ENCODE measurements at regions of chr4 and their contacts with region 1.

Region 1: DNA sequence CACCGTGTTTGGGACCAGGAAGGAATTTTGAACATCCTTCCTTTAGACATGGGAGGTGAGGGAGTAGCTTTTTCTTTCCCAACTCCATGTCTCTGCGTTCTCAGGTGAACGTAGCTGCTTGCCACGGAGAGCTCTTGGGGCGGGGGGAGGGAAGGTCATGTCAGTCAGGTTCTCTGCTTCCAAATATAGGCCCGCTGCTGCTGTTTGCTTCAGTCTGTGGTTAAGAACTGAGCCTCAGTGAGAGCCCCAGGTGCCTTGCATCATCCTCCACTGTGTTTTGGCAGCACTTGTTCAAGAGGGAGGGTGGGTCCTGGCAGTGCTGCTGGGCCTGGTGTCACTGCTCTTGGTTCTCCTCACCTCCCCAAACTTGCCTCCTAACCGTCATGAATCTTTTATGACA is 46.5 kb downstream of the HADH start:
- DNase-seq: peak; percentile 87
- H3K4me3 Mint-ChIP-seq: peak overlapping the region; percentile 42
- H3K27ac Mint-ChIP-seq: peak overlapping the region; percentile 93
- H3K4me1 Mint-ChIP-seq: peaks cover 66% of the 10 kb centered on the region
- H3K27me3 Mint-ChIP-seq: no peaks in the 10 kb centered on the region

Region 2: GRCh38 chr4:107951551-107951950 is 84.7 kb before region 1 on chr4:
- CTCF ChIA-PET with region 1: no interaction called
- POLR2A ChIA-PET with region 1: no interaction called
- DNase-seq: no peak
- H3K4me3 Mint-ChIP-seq: no peak overlapping the region
- H3K27ac Mint-ChIP-seq: no peak overlapping the region
- H3K4me1 Mint-ChIP-seq: no peaks in the 10 kb centered on the region
- H3K27me3 Mint-ChIP-seq: no peaks in the 10 kb centered on the region

Region 3: DNA sequence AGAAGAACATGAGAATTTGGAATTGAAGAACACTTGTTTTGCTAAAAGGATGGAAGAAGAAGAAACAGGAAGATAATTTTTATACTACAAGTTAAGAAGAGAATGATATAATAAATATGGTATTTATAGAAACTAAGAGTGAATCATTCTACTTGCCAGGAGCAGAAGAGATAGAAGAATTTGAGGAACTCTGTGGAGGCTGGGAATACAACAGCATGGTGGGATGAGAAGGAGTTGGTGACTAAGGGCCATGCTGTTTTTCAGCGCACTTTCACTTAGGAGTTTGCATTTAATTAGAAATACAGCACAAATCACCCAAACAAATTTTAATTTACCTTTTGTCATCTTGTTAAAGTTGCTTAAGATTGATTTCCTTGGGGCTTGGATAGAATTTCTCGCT is 26.0 kb before region 1 on chr4:
- CTCF ChIA-PET with region 1: no interaction called
- POLR2A ChIA-PET with region 1: no interaction called
- DNase-seq: no peak
- H3K4me3 Mint-ChIP-seq: no peak overlapping the region
- H3K27ac Mint-ChIP-seq: no peak overlapping the region
- H3K4me1 Mint-ChIP-seq: peaks cover 21% of the 10 kb centered on the region
- H3K27me3 Mint-ChIP-seq: no peaks in the 10 kb centered on the region

Region 4: DNA sequence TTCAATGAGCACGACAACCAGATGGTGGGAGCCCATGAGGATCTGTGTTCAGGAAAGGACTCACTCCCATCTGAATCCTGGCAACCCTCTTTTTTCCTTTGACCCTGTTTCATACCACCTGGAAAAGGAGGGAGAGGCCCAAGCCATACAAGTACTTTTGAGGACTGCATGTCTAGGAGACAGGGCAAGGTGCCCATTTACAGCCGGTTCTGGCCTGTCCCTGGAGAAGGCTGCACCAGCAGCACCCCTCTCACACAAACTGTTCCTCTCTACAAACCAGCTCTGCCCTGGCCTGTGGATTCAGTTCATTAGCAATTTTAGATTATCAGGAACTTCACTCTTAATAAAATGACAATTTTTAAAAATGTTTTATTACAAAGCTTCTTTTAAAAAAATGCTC is 11.0 kb after region 1 on chr4:
- CTCF ChIA-PET with region 1: interaction called, 15 read pairs
- POLR2A ChIA-PET with region 1: no interaction called
- DNase-seq: no peak
- H3K4me3 Mint-ChIP-seq: no peak overlapping the region
- H3K27ac Mint-ChIP-seq: no peak overlapping the region
- H3K4me1 Mint-ChIP-seq: peaks cover 77% of the 10 kb centered on the region
- H3K27me3 Mint-ChIP-seq: no peaks in the 10 kb centered on the region

Region 5: DNA sequence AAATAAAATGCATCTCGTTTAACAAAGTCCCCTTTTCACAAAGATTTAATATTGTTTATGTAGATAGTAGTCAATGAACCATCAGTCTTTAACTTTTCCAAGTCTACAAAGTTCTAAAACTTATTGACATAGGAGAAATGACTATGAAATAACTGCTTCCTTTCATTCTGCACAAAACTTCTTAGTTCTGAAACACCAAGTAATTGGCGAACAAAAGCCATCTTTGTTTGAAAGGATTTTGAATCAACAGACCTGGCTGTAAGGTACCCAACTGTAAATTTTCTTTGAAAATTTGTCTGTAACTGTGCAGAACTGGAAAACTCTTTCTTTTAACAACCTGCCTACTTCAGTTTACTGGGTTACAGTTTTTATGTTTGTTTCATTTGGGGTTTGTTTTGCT is 106.7 kb after region 1 on chr4:
- CTCF ChIA-PET with region 1: no interaction called
- POLR2A ChIA-PET with region 1: no interaction called
- DNase-seq: no peak
- H3K4me3 Mint-ChIP-seq: peak overlapping the region; percentile 55
- H3K27ac Mint-ChIP-seq: peak overlapping the region; percentile 81
- H3K4me1 Mint-ChIP-seq: peaks cover 97% of the 10 kb centered on the region
- H3K27me3 Mint-ChIP-seq: no peaks in the 10 kb centered on the region